MCF 10A (cell line): ENCODE measurements at regions of chr2 and their contacts with region 1.

Region 1: DNA sequence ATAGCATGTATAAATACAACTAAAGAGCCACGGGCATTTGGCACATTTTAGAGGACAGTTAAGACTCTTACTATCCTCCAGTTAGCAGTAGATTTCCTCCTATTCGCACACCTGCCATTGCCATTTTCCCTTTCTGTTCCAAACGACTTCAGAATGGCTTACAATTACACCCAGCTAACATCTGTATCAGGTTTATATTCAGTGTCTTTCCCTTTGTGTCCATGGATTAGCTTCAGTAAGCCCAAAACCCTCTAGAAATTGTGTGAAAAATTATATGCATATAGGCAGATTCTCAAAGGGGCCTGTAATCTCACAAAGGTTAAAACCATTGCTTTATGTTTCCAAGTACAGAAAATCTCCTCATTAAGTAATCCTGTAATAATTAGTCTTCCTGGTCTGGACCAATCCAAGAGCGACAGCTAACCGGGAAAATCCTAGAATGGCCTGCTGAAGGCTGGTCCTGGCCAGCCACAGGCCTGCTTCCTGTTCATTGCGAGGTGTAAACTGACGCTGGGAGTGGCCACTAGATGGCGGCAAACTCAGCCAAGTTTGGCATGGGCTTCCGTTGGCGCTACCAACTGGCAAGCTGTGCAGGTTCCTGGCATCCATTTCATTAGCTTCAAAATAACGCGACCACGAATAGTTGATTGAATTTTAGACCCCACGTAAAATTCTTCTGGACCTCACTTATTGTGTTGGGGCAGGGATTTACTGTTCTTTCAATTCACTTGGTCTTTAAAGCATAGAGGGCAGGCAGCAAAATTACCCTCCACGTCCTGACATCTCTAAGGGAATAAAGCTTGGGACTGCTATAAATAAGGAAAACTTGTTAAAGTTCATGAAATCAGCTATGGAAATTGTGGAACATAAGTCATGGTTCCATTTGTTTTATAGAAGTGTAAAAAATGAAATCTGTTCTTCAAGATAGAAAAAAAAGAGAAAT is 17.1 kb downstream of the ARHGAP25 start:
- DNase-seq: peak; percentile 90
- H3K4me3 Mint-ChIP-seq: no peak overlapping the region
- H3K27ac Mint-ChIP-seq: peak overlapping the region; percentile 28
- H3K4me1 Mint-ChIP-seq: peaks cover 17% of the 10 kb centered on the region
- H3K27me3 Mint-ChIP-seq: no peaks in the 10 kb centered on the region
- CTCF ChIP-seq: peak; percentile 91

Region 2: GRCh38 chr2:68709421-68709911 is 42.2 kb before region 1 on chr2:
- CTCF ChIA-PET with region 1: interaction called, 28 read pairs
- POLR2A ChIA-PET with region 1: no interaction called
- intact Hi-C with region 1: loop called (anchors 5 kb)
- DNase-seq: peak; percentile 60
- H3K4me3 Mint-ChIP-seq: no peak overlapping the region
- H3K27ac Mint-ChIP-seq: no peak overlapping the region
- H3K4me1 Mint-ChIP-seq: no peaks in the 10 kb centered on the region
- H3K27me3 Mint-ChIP-seq: peaks cover 43% of the 10 kb centered on the region
- CTCF ChIP-seq: peak; percentile 66

Region 3: GRCh38 chr2:68766376-68766845 is 14.7 kb after region 1 on chr2:
- CTCF ChIA-PET with region 1: interaction called, 12 read pairs
- POLR2A ChIA-PET with region 1: interaction called, 5 read pairs
- intact Hi-C with region 1: no loop called
- DNase-seq: peak; percentile 82
- H3K4me3 Mint-ChIP-seq: peak overlapping the region; percentile 16
- H3K27ac Mint-ChIP-seq: peak overlapping the region; percentile 57
- H3K4me1 Mint-ChIP-seq: peaks cover 17% of the 10 kb centered on the region
- H3K27me3 Mint-ChIP-seq: no peaks in the 10 kb centered on the region
- CTCF ChIP-seq: no peak

Region 4: DNA sequence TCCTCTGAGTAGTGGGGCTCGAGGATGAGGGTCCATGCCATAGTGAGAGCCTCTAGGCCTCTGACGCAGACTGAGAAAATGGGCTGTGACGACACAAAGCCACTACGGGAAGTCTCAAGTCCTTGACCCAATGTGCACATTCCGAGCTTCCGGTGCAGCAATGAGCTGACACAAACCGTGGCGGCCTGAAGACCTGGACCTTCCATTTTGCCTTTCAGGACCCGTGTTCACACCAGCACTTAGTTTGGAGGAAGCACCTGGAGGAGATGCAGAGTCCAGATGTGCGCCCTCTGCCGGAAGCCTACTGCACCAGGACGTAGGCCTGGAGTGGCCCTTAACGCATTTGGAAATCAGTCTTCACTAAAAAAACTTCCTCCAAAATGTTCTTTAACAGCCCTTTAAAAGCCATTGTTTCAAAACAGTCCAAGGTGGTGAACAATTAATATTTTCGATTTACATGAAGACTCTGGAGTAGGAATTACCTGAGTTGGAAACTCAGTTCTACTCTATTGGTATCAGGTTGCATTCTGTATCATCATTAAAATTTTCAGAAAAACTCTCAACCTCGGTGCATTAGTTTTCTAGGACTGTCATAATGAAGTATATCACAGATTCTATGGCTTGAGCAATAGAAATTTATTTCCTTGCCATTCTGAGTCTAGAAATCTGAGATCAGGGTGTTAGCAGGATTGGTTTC is 85.6 kb after region 1 on chr2:
- CTCF ChIA-PET with region 1: interaction called, 54 read pairs
- POLR2A ChIA-PET with region 1: interaction called, 3 read pairs
- intact Hi-C with region 1: loop called (anchors 1 kb)
- DNase-seq: peak; percentile 84
- H3K4me3 Mint-ChIP-seq: no peak overlapping the region
- H3K27ac Mint-ChIP-seq: no peak overlapping the region
- H3K4me1 Mint-ChIP-seq: peaks cover 4% of the 10 kb centered on the region
- H3K27me3 Mint-ChIP-seq: no peaks in the 10 kb centered on the region
- CTCF ChIP-seq: peak; percentile 68

Region 5: GRCh38 chr2:68909793-68910674 is 158.4 kb after region 1 on chr2:
- CTCF ChIA-PET with region 1: interaction called, 87 read pairs
- POLR2A ChIA-PET with region 1: interaction called, 16 read pairs
- intact Hi-C with region 1: loop called (anchors 1 kb)
- DNase-seq: peak; percentile 84
- H3K4me3 Mint-ChIP-seq: no peak overlapping the region
- H3K27ac Mint-ChIP-seq: no peak overlapping the region
- H3K4me1 Mint-ChIP-seq: peaks cover 18% of the 10 kb centered on the region
- H3K27me3 Mint-ChIP-seq: no peaks in the 10 kb centered on the region
- CTCF ChIP-seq: peak; percentile 89

Region 6: DNA sequence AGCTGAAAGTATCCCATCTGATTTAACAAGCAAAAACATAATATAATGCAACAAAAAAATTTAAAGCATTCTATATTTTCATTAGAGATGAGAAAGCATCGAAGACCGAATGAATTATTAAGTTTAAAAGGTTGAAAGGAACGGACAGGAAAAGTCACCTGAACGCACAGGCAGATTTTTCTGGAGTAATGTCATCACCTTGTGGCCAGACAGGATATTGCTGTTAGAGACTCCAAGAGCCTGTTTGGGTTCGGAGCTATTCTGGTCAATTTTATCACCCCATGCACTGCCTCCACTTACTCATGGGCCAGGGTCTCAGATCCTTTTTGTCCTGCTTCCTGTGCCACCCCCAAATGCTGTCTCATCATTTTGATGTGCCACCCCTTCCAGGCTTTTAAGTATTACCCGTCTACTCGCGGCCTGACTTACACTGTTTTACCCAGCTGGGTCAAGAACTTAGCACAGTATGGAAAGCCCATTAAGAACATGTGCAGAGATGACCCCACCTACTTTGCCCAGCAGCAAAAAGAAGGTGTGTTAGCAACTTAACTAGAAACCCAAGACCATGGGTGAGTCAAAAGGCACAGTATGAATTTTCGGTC is 173.7 kb after region 1 on chr2:
- CTCF ChIA-PET with region 1: interaction called, 110 read pairs
- POLR2A ChIA-PET with region 1: interaction called, 7 read pairs
- intact Hi-C with region 1: loop called (anchors 1 kb)
- DNase-seq: peak; percentile 73
- H3K4me3 Mint-ChIP-seq: no peak overlapping the region
- H3K27ac Mint-ChIP-seq: no peak overlapping the region
- H3K4me1 Mint-ChIP-seq: peaks cover 5% of the 10 kb centered on the region
- H3K27me3 Mint-ChIP-seq: no peaks in the 10 kb centered on the region
- CTCF ChIP-seq: peak; percentile 93